PC-9 (cell line): ENCODE measurements at regions of chr7 and their contacts with region 1.

Region 1: GRCh38 chr7:135662373-135663114 is at the start of gene STMP1:
- DNase-seq: peak; percentile 83 to 97
- H3K4me3 ChIP-seq: peak within 1 kb of the TSS; percentile 99
- H3K27ac ChIP-seq: peak within 1 kb of the TSS; percentile 92
- H3K4me1 ChIP-seq: peaks cover 16% of the 10 kb centered on the region
- H3K27me3 ChIP-seq: no peaks in the 10 kb centered on the region
- CTCF ChIP-seq: peak; percentile 89
- total RNA-seq, gene STMP1: 60.4 and 77.0 TPM in 2 replicates

Region 2: GRCh38 chr7:135785065-135785464 is 122.5 kb after region 1 on chr7:
- CTCF ChIA-PET with region 1: no interaction called
- POLR2A ChIA-PET with region 1: interaction called, 11 read pairs
- intact Hi-C with region 1: no loop called
- DNase-seq: no peak
- H3K4me3 ChIP-seq: no peak overlapping the region
- H3K27ac ChIP-seq: no peak overlapping the region
- H3K4me1 ChIP-seq: no peaks in the 10 kb centered on the region
- H3K27me3 ChIP-seq: no peaks in the 10 kb centered on the region
- CTCF ChIP-seq: no peak

Region 3: GRCh38 chr7:136023134-136023875 is 360.8 kb after region 1 on chr7:
- CTCF ChIA-PET with region 1: no interaction called
- POLR2A ChIA-PET with region 1: interaction called, 60 read pairs
- intact Hi-C with region 1: no loop called
- DNase-seq: no peak
- H3K4me3 ChIP-seq: no peak overlapping the region
- H3K27ac ChIP-seq: no peak overlapping the region
- H3K4me1 ChIP-seq: no peaks in the 10 kb centered on the region
- H3K27me3 ChIP-seq: no peaks in the 10 kb centered on the region
- CTCF ChIP-seq: no peak